HepG2 (cell line): ENCODE measurements at regions of chr7 and their contacts with region 1.

Region 1: GRCh38 chr7:27745064-27745583 is 5.2 kb downstream of the TAX1BP1 start:
- DNase-seq: peak; percentile 92
- ATAC-seq: peak; percentile 65
- H3K4me3 ChIP-seq: peak overlapping the region in 2 of 3 experiments; percentile 35 to 47; a peak in 4 of 6 replicates
- H3K27ac ChIP-seq: peak overlapping the region; percentile 92
- H3K4me1 ChIP-seq: peaks cover 52% of the 10 kb centered on the region
- H3K27me3 ChIP-seq: no peaks in the 10 kb centered on the region; a peak in 1 of 5 replicates
- CTCF ChIP-seq: peak; percentile 86
- EP300 ChIP-seq: peak in 1 of 2 experiments; percentile 68; a peak in 2 of 4 replicates
- POLR2A ChIP-seq: peak in 1 of 2 experiments; percentile 66; a peak in 2 of 4 replicates
- RAD21 ChIP-seq: peak; percentile 43; the same call in 1 of the 2 replicates

Region 2: GRCh38 chr7:27784393-27785053 is 39.4 kb after region 1 on chr7:
- CTCF ChIA-PET with region 1: no interaction called
- POLR2A ChIA-PET with region 1: no interaction called
- in situ Hi-C with region 1: no loop called
- intact Hi-C with region 1: loop called (anchors 1 kb)
- DNase-seq: peak; percentile 81
- ATAC-seq: peak; percentile 82
- H3K4me3 ChIP-seq: no peak overlapping the region
- H3K27ac ChIP-seq: no peak overlapping the region
- H3K4me1 ChIP-seq: 0 out of 2 replicates have a peak, but pooled peaks cover 13% of the 10 kb centered on the region
- H3K27me3 ChIP-seq: no peaks in the 10 kb centered on the region
- CTCF ChIP-seq: peak; percentile 48
- EP300 ChIP-seq: no peak
- POLR2A ChIP-seq: no peak
- RAD21 ChIP-seq: no peak